ENCODE measurements at regions of chr12 and their contacts with region 1.

Region 1: GRCh38 chr12:29929295-29929694 is 145.6 kb upstream of the TMTC1 start:
- DNase-seq: no peak
- ATAC-seq: peak; percentile 79
- H3K4me3 ChIP-seq: no peak overlapping the region
- H3K27ac ChIP-seq: no peak overlapping the region
- H3K4me1 ChIP-seq: no peaks in the 10 kb centered on the region
- H3K27me3 ChIP-seq: no peaks in the 10 kb centered on the region; the same call in 1 of the 2 replicates
- CTCF ChIP-seq: no peak

Region 2: DNA sequence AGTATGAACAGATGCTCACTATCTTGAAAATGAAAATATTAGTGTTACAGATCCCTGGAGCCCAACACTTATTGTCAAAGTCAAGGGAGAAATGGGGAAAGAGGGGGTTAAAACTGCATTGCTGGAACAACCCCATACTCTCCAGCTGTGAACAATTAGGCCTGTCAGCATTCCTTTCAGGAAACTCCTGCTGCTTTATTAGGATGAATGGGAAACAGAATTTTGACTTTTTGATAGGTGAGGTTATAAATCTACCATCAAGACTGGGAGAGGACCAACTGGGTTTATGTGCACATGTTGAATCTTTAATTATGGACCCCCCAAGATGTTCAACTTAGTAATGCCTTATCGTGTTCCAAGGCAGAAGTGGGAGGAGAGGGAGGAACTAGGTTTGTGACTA is 230.5 kb before region 1 on chr12:
- CTCF ChIA-PET with region 1: interaction called, 16 read pairs
- POLR2A ChIA-PET with region 1: no interaction called
- intact Hi-C with region 1: no loop called
- DNase-seq: no peak
- ATAC-seq: peak; percentile 13; the same call in 1 of the 2 replicates
- H3K4me3 ChIP-seq: no peak overlapping the region
- H3K27ac ChIP-seq: no peak overlapping the region
- H3K4me1 ChIP-seq: no peaks in the 10 kb centered on the region
- H3K27me3 ChIP-seq: peaks cover 12% of the 10 kb centered on the region
- CTCF ChIP-seq: no peak

Region 3: DNA sequence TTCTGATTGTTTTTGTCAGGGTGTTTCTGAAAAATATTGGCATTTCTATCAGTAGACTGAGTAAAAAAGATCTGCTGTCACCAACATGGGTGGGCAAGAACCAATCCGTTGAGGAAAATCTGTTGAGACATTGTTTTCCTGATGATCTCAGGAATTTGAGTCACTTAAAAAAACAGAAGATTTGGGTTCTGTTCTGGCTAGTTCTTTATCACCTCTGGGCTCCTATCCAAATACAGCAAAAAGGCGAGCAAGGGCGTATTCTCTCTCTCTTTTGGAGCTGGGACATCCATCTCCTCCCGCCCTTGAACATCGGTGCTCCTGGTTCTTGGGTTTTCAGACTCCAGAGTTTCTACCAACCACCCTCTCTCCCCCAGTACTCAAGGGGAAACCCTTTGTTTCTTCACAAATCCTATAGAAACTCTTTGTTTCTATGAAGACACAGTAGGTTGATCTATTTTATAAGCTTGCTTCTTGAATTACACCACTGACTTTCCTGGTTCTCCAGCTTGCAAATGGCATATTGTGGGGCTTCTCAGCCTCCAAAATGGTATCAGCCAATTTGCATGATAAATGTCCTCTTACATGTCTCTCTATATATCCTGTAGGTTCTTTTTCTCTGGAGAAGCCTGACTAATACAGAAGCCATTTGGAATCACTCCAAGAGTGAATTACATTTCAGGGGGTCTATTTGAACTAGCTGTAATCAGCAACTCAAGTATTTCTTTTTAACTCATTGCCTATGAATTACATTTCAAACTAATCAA is 118.4 kb after region 1 on chr12:
- CTCF ChIA-PET with region 1: no interaction called
- POLR2A ChIA-PET with region 1: no interaction called
- intact Hi-C with region 1: no loop called
- DNase-seq: peak; percentile 63
- ATAC-seq: peak; percentile 55
- H3K4me3 ChIP-seq: peak overlapping the region; percentile 39; the same call in 1 of the 2 replicates
- H3K27ac ChIP-seq: peak overlapping the region; percentile 37
- H3K4me1 ChIP-seq: peaks cover 15% of the 10 kb centered on the region
- H3K27me3 ChIP-seq: no peaks in the 10 kb centered on the region
- CTCF ChIP-seq: no peak

Region 4: GRCh38 chr12:30088259-30088995 is 159.1 kb after region 1 on chr12:
- CTCF ChIA-PET with region 1: no interaction called
- POLR2A ChIA-PET with region 1: no interaction called
- intact Hi-C with region 1: loop called (anchors 1 kb)
- DNase-seq: peak; percentile 79
- ATAC-seq: peak; percentile 90
- H3K4me3 ChIP-seq: 0 out of 2 replicates have a peak overlapping the region, but pooled peaks have one; percentile 23
- H3K27ac ChIP-seq: peak overlapping the region; percentile 71
- H3K4me1 ChIP-seq: peaks cover 24% of the 10 kb centered on the region
- H3K27me3 ChIP-seq: no peaks in the 10 kb centered on the region
- CTCF ChIP-seq: no peak

Region 5: GRCh38 chr12:31005944-31006361 is 1076.7 kb after region 1 on chr12:
- CTCF ChIA-PET with region 1: no interaction called
- POLR2A ChIA-PET with region 1: no interaction called
- intact Hi-C with region 1: no loop called
- DNase-seq: peak; percentile 90
- ATAC-seq: peak; percentile 90
- H3K4me3 ChIP-seq: no peak overlapping the region
- H3K27ac ChIP-seq: peak overlapping the region; percentile 98
- H3K4me1 ChIP-seq: peaks cover 49% of the 10 kb centered on the region
- H3K27me3 ChIP-seq: no peaks in the 10 kb centered on the region
- CTCF ChIP-seq: no peak

Measured in PC-3 (cell line).